ENCODE measurements at regions of chr15 and their contacts with region 1.

Region 1: DNA sequence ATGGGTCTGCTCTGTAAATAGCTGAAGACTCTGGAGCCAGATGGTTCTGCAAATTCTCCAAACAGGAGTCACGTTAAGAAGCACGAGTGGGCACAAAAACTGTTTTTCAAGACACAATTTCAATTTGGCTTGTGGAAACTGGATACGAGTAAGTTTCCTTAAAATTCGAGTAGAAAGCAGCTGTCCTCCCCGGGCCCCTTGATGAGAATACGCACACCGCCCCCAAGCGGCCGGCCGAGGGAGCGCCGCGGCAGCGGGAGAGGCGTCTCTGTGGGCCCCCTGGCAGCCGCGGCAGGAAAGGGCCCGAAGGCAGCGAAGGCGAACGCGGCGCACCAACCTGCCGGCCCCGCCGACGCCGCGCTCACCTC is 778 bp upstream of the THBS1 start:
- DNase-seq: peak; percentile 92 to 95
- ATAC-seq: peak; percentile 62 to 91 (median 85)
- H3K4me3 ChIP-seq: peak overlapping the region; percentile 19 to 88 (median 67)
- H3K27ac ChIP-seq: peak overlapping the region; percentile 83 to 97 (median 92)
- H3K4me1 ChIP-seq: peaks cover 2 to 62% (median 41%) of the 10 kb centered on the region in 9 donors
- H3K27me3 ChIP-seq: peaks cover 0 to 7% (median 0%) of the 10 kb centered on the region in 7 donors
- CTCF ChIP-seq: peak; percentile 88 to 99 (median 98)

Region 2: DNA sequence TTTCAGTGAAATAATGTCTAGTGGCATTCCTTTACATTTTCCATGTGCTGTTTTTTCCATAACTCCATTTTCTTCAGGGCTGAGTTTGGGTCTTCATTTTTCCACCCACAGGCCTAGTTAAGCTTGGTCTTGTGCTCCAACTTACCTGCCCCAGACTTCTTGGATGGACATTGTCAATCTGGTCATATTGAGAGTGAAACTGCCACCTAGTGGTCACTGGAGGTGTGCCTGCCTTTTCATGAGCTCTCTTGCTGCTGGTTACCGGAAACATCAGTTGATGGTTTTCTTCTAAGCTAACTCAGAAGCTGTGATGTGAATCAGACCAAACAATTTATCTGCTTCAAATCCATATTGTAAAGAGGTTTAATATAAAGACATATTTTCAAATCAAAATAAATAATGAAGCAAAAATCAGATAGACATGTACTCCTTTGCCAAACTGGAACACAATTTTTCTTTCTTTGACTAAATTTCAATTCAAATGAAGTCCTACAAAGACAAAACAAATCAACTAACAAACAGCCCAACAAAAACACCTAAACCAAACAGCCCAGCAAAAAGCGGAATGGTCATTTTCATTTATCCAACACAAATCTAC is 880.4 kb before region 1 on chr15:
- intact Hi-C with region 1: loop called in 2 of 10 experiments (anchors 10 kb)
- DNase-seq: peak; percentile 11 to 55
- ATAC-seq: peak in 3 of 8 donors; percentile 40 to 50 (median 49)
- H3K4me3 ChIP-seq: no peak overlapping the region
- H3K27ac ChIP-seq: no peak overlapping the region
- H3K4me1 ChIP-seq: peaks cover 0 to 10% (median 0%) of the 10 kb centered on the region in 9 donors
- H3K27me3 ChIP-seq: peaks cover 0 to 15% (median 0%) of the 10 kb centered on the region in 7 donors
- CTCF ChIP-seq: peak; percentile 59 to 93 (median 81)

Region 3: DNA sequence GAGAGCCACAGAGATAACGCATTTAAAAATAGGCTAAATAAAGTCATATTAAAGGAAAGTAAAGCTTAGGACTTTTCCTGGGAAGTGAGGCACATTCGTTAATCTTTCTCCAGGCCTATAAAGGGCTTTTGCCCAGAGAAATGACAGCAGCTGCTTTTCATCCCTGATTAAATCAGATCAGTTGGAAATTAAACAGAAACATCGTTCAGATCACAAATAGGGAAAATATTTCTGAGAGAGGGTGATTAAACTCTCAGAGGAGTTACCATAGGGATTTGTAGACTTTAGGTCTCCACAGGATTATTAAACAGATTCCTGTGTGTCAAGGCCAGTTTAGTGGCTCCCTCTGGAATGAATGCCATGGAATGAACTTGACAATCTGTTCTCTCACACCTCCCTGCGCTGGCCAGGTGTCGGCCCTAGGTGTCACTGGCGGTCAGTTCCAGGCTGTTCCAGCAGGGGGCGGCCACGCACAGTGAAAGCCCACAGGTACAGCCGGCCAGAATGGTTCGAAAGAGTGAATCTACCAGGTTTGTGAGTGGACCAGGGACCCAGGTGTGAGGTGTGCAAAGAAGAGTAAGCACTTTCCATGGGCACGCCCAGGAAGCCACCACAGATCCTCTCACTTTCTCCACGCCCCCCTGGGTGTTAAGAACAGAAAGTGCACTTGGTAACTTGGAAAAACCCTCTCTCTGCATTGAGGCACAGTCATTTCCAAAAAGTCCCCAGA is 762.5 kb before region 1 on chr15:
- intact Hi-C with region 1: loop called in 9 of 10 experiments (anchors 2 to 10 kb)
- DNase-seq: peak; percentile 74 to 81
- ATAC-seq: peak; percentile 85 to 96 (median 94)
- H3K4me3 ChIP-seq: peak overlapping the region in 1 of 10 donors; percentile 17
- H3K27ac ChIP-seq: no peak overlapping the region
- H3K4me1 ChIP-seq: peaks cover 0 to 9% (median 3%) of the 10 kb centered on the region in 9 donors
- H3K27me3 ChIP-seq: no peaks in the 10 kb centered on the region
- CTCF ChIP-seq: peak; percentile 96 to 100 (median 99)

Region 4: GRCh38 chr15:39171944-39172368 is 408.1 kb before region 1 on chr15:
- intact Hi-C with region 1: loop called (anchors 1 to 10 kb)
- DNase-seq: peak in 1 of 2 donors; percentile 44
- ATAC-seq: peak; percentile 81 to 96 (median 90)
- H3K4me3 ChIP-seq: no peak overlapping the region
- H3K27ac ChIP-seq: peak overlapping the region in 6 of 10 donors; percentile 12 to 62 (median 29)
- H3K4me1 ChIP-seq: peaks cover 0 to 20% (median 9%) of the 10 kb centered on the region in 9 donors
- H3K27me3 ChIP-seq: no peaks in the 10 kb centered on the region
- CTCF ChIP-seq: peak in 7 of 9 donors; percentile 8 to 66 (median 55)

Region 5: GRCh38 chr15:39429898-39430357 is 150.2 kb before region 1 on chr15:
- intact Hi-C with region 1: loop called in 4 of 10 experiments (anchors 5 to 10 kb)
- DNase-seq: no peak
- ATAC-seq: no peak
- H3K4me3 ChIP-seq: no peak overlapping the region
- H3K27ac ChIP-seq: peak overlapping the region in 7 of 10 donors; percentile 41 to 82 (median 58)
- H3K4me1 ChIP-seq: peaks cover 3 to 86% (median 44%) of the 10 kb centered on the region in 9 donors
- H3K27me3 ChIP-seq: no peaks in the 10 kb centered on the region
- CTCF ChIP-seq: no peak

Region 6: GRCh38 chr15:39495871-39496840 is 83.9 kb before region 1 on chr15:
- intact Hi-C with region 1: loop called in 4 of 10 experiments (anchors 5 to 10 kb)
- DNase-seq: no peak
- ATAC-seq: no peak
- H3K4me3 ChIP-seq: no peak overlapping the region
- H3K27ac ChIP-seq: peak overlapping the region in 5 of 10 donors; percentile 11 to 36 (median 28)
- H3K4me1 ChIP-seq: peaks cover 0 to 49% (median 25%) of the 10 kb centered on the region in 9 donors
- H3K27me3 ChIP-seq: no peaks in the 10 kb centered on the region
- CTCF ChIP-seq: no peak

Region 7: DNA sequence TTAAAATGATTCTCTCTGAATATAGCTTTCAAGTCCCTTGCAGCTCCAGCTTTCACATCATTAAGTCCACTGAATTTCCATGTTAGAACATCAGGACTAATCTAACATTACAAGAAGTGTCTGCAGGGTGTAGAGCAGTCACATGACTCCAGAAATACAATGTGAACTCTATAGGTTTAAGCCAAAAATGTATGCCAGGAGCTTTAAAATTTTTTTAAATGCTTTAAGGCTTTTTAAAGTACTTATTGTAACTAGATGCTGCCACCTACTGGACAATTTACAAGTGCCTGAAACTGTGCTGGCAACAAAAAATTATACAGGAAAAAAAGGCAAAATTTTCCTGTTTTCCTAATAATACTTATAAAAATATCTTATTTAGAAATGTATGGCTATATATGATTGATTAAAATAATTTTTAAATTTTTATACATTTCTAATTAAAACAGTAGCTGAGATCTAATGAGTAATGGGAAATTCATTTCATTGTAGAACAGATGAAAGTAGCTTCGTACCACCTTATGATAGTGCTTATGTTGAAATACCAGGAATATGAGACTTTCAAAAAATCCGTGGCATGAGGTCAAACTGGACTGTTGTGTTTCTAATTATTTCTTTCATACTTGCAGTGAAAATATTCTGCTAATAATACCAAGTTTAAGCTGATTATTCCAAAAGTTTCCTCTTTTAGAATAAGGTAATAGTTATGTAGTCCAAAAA is 176.9 kb after region 1 on chr15:
- intact Hi-C with region 1: loop called in 7 of 10 experiments (anchors 2 to 10 kb)
- DNase-seq: peak in 1 of 2 donors; percentile 16
- ATAC-seq: peak in 1 of 8 donors; percentile 35
- H3K4me3 ChIP-seq: no peak overlapping the region
- H3K27ac ChIP-seq: no peak overlapping the region
- H3K4me1 ChIP-seq: peaks cover 0 to 7% (median 0%) of the 10 kb centered on the region in 9 donors
- H3K27me3 ChIP-seq: no peaks in the 10 kb centered on the region
- CTCF ChIP-seq: peak; percentile 52 to 94 (median 87)

Measured in heart right ventricle (tissue), 16 donors.